Caco-2 (cell line): ENCODE measurements at regions of chr5 and their contacts with region 1.

Region 1: GRCh38 chr5:111278845-111279504 is 54.8 kb downstream of the CAMK4 start:
- DNase-seq: peak; percentile 60 to 78
- H3K4me3 ChIP-seq: no peak overlapping the region
- H3K4me3 Mint-ChIP-seq: no peak overlapping the region
- H3K27ac Mint-ChIP-seq: no peak overlapping the region
- H3K4me1 ChIP-seq: no peaks in the 10 kb centered on the region
- H3K4me1 Mint-ChIP-seq: no peaks in the 10 kb centered on the region
- H3K27me3 ChIP-seq: no peaks in the 10 kb centered on the region
- H3K27me3 Mint-ChIP-seq: peaks cover 3% of the 10 kb centered on the region
- CTCF ChIP-seq: peak; percentile 84 to 87

Region 2: DNA sequence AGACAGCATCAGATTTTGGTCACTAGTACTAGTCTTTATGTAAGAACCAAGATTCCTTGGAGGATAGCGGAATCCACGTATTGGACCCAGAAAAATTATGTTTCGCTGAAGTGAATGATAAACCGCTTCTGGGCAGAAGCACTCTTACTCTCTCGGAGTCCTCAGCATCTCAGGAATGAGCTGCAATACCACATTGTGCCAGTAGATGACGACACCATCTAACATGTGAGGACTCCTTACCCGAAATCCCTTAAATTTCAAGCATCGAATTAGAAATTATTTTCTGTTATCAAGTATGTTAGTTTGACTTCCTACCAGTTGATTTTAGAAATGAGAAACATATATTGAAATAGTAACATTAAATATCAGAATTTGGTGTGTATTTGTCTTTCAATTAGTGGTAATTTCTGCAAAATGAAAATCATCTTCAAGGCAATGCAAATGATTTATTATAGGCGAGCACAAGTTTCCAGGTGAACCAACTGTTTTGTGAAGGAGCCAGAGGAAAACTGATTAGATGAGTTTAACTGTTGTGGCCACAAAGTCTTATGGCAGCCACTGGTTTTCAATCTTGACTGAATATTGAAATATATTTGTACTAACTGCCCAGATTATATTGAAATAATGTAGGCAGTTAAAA is 120.8 kb before region 1 on chr5:
- CTCF ChIA-PET with region 1: no interaction called
- POLR2A ChIA-PET with region 1: no interaction called
- intact Hi-C with region 1: loop called (anchors 1 kb)
- DNase-seq: peak; percentile 65 to 75
- H3K4me3 ChIP-seq: no peak overlapping the region
- H3K4me3 Mint-ChIP-seq: no peak overlapping the region
- H3K27ac Mint-ChIP-seq: no peak overlapping the region
- H3K4me1 ChIP-seq: no peaks in the 10 kb centered on the region
- H3K4me1 Mint-ChIP-seq: no peaks in the 10 kb centered on the region
- H3K27me3 ChIP-seq: no peaks in the 10 kb centered on the region
- H3K27me3 Mint-ChIP-seq: peaks cover 10% of the 10 kb centered on the region
- CTCF ChIP-seq: peak; percentile 97 to 99

Region 3: DNA sequence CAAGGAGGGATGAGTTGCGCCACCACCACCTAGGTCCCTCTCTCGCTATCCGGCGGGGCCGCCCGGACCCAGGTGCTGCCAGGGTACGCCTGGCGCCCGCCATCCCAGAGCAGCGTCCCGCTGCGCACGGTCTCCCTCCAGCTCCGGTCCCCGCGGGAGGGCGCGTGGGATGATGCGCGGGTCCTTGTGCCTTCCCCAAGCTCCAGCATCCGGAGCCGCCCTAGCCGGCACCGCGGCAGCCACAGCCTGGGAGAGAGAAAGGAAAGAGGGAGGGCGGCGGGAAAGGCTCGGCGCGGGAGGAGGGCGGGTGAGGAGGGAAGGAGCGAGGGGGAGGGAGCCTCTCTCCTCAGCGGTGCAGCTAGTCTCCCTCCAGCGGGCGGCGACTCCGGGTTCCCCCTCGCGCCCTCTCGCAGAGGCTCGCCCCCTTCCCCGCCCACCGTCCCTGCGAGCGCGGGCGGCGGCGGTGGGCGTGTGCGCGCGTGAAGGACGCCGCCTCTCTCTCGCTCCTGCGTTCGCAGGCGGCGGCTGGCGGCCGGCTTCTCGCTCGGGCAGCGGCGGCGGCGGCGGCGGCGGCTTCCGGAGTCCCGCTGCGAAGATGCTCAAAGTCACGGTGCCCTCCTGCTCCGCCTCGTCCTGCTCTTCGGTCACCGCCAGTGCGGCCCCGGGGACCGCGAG is 54.9 kb before region 1 on chr5 and contains the start of gene CAMK4:
- CTCF ChIA-PET with region 1: no interaction called
- POLR2A ChIA-PET with region 1: no interaction called
- intact Hi-C with region 1: loop called (anchors 2 kb)
- DNase-seq: peak; percentile 44 to 46
- H3K4me3 ChIP-seq: peak within 1 kb of the TSS; percentile 43
- H3K4me3 Mint-ChIP-seq: peak within 1 kb of the TSS; percentile 59
- H3K27ac Mint-ChIP-seq: no peak within 1 kb of the TSS
- H3K4me1 ChIP-seq: peaks cover 3% of the 10 kb centered on the region; the same call in 1 of the 2 replicates
- H3K4me1 Mint-ChIP-seq: peaks cover 6% of the 10 kb centered on the region
- H3K27me3 ChIP-seq: peaks cover 10% of the 10 kb centered on the region
- H3K27me3 Mint-ChIP-seq: peaks cover 34% of the 10 kb centered on the region
- CTCF ChIP-seq: peak in 1 of 2 experiments; percentile 1
- total RNA-seq, gene CAMK4: not detected in 2 replicates